ENCODE measurements at regions of chr20 and their contacts with region 1.

Region 1: DNA sequence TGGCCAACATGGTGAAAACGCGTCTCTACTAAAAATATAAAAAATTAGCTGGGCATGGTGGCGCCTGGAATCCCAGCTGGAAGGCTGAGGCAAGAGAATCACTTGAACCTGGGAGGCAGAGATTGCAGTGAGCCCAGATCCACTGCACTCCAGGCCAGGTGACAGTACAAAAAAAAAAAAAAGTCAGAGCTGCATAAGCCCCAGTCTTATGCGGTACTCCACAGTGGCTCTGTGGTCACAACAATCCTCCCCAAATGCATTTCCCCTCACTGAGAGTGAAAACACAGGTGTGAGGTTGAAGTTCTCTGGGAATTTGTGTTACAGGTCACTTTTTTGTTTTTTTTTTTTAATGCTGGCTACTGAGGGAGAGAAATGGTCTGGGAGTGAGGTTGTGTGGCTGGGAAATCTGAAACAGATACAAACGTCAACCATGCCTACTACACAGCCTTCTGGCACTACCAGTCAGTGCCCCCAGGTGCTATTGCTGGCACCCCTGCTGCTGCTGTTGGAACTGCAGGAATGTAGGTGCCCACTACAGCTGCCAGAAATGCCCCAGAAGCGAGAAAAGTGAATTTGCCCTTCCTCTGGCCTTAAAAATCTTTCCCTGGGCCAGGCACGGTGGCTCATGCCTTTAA is 5.7 kb downstream of the MRPS26 start:
- DNase-seq: no peak
- H3K4me3 ChIP-seq: no peak overlapping the region
- H3K27ac ChIP-seq: no peak overlapping the region
- H3K4me1 ChIP-seq: peaks cover 10 to 20% (median 15%) of the 10 kb centered on the region in 4 donors
- H3K27me3 ChIP-seq: no peaks in the 10 kb centered on the region
- CTCF ChIP-seq: no peak
- EP300 ChIP-seq: no peak
- POLR2A ChIP-seq: no peak

Region 2: GRCh38 chr20:2967841-2968240 is 83.7 kb before region 1 on chr20:
- intact Hi-C with region 1: no loop called
- DNase-seq: no peak
- H3K4me3 ChIP-seq: no peak overlapping the region
- H3K27ac ChIP-seq: no peak overlapping the region
- H3K4me1 ChIP-seq: no peaks in the 10 kb centered on the region
- H3K27me3 ChIP-seq: no peaks in the 10 kb centered on the region
- CTCF ChIP-seq: no peak
- EP300 ChIP-seq: no peak
- POLR2A ChIP-seq: no peak

Region 3: GRCh38 chr20:3115190-3116107 is 63.9 kb after region 1 on chr20:
- intact Hi-C with region 1: loop called (anchors 10 kb)
- DNase-seq: peak in 1 of 2 donors; percentile 76
- H3K4me3 ChIP-seq: no peak overlapping the region
- H3K27ac ChIP-seq: no peak overlapping the region
- H3K4me1 ChIP-seq: peaks cover 4 to 41% (median 14%) of the 10 kb centered on the region in 4 donors
- H3K27me3 ChIP-seq: no peaks in the 10 kb centered on the region
- CTCF ChIP-seq: peak in 5 of 7 experiments; percentile 64 to 82 (median 74)
- EP300 ChIP-seq: no peak
- POLR2A ChIP-seq: no peak